ENCODE measurements at regions of chr15 and their contacts with region 1.

Region 1: GRCh38 chr15:41894791-41895463 is 1.1 kb upstream of the SPTBN5 start:
- DNase-seq: peak; percentile 79 to 95 (median 90)
- ATAC-seq: peak; percentile 93
- H3K4me3 ChIP-seq: peak overlapping the region; percentile 36
- H3K4me3 Mint-ChIP-seq: peak overlapping the region; percentile 83
- H3K27ac ChIP-seq: peak overlapping the region; percentile 85 to 92
- H3K27ac Mint-ChIP-seq: peak overlapping the region; percentile 100
- H3K4me1 ChIP-seq: peaks cover 52% of the 10 kb centered on the region
- H3K4me1 Mint-ChIP-seq: peaks cover 58% of the 10 kb centered on the region
- H3K27me3 ChIP-seq: no peaks in the 10 kb centered on the region
- H3K27me3 Mint-ChIP-seq: no peaks in the 10 kb centered on the region
- CTCF ChIP-seq: no peak

Region 2: DNA sequence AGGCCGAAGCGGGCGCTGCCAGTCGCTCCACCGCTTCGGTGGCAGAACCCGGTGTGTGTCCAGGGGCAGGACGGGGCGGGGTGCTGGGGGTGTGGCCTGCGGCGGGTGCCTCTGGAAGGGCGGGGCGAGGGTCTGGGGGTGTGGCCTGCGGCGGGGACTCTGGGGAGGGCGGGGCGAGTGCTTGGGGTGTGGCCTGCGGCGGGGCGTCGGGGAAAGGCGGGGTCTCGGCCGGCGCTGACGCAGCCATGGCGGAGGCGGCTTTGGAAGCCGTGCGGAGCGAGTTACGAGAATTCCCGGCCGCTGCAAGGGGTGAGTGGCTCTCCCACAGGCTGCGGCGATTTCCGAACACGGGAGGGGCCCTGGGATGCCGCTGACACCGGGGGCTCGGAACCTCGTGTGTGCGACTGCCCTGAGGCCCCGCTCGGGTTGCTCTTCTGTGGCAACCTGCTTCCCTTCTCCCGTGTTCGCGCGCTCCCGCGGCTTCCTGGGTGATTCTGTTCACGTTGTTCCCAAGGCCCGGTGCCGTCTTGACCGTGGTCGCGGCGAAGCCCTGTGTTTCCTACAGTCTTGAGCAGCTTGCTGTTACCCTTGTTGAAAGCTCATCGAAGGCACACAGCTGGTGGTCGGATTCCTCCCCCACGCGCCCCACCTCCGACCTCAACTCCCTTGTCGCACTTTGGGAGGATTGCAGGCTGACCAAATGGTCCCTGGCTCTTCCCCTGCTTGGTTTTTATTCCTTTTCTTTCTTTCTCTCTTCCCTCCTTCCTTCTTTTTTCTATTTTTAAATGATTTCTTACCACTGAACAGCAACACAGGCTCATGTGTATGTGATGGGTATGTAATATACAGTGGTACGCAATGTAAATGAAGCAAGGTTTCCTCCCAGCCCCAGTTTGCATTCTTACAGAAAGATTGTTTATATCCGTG is 66.8 kb before region 1 on chr15 and contains the start of gene JMJD7:
- CTCF ChIA-PET with region 1: no interaction called
- POLR2A ChIA-PET with region 1: interaction called, 7 read pairs
- intact Hi-C with region 1: loop called in 1 of 2 experiments (anchors 2 kb)
- DNase-seq: peak; percentile 92 to 99 (median 96)
- ATAC-seq: peak; percentile 94
- H3K4me3 ChIP-seq: peak within 1 kb of the TSS; percentile 92
- H3K4me3 Mint-ChIP-seq: peak within 1 kb of the TSS; percentile 90
- H3K27ac ChIP-seq: peak within 1 kb of the TSS; percentile 53 to 64
- H3K27ac Mint-ChIP-seq: peak within 1 kb of the TSS; percentile 87
- H3K4me1 ChIP-seq: peaks cover 52% of the 10 kb centered on the region
- H3K4me1 Mint-ChIP-seq: peaks cover 30% of the 10 kb centered on the region
- H3K27me3 ChIP-seq: no peaks in the 10 kb centered on the region
- H3K27me3 Mint-ChIP-seq: no peaks in the 10 kb centered on the region
- CTCF ChIP-seq: no peak
- total RNA-seq, gene JMJD7: 35.6 to 38.4 TPM

Region 3: GRCh38 chr15:41870689-41871081 is 24.2 kb before region 1 on chr15:
- CTCF ChIA-PET with region 1: no interaction called
- POLR2A ChIA-PET with region 1: interaction called, 17 read pairs
- intact Hi-C with region 1: no loop called
- DNase-seq: peak; percentile 30 to 81 (median 58)
- ATAC-seq: peak; percentile 97
- H3K4me3 ChIP-seq: no peak overlapping the region
- H3K4me3 Mint-ChIP-seq: no peak overlapping the region
- H3K27ac ChIP-seq: no peak overlapping the region
- H3K27ac Mint-ChIP-seq: peak overlapping the region; percentile 72
- H3K4me1 ChIP-seq: peaks cover 16% of the 10 kb centered on the region
- H3K4me1 Mint-ChIP-seq: peaks cover 10% of the 10 kb centered on the region
- H3K27me3 ChIP-seq: no peaks in the 10 kb centered on the region
- H3K27me3 Mint-ChIP-seq: no peaks in the 10 kb centered on the region
- CTCF ChIP-seq: no peak

Measured in CD4-positive, alpha-beta T cell (primary cell).